ENCODE measurements at regions of chr1 and their contacts with region 1.

Region 1: GRCh38 chr1:50704126-50704525 is 255.9 kb downstream of the FAF1 start:
- DNase-seq: no peak
- ATAC-seq: no peak

Region 2: GRCh38 chr1:50368179-50369012 is 335.7 kb before region 1 on chr1:
- intact Hi-C with region 1: loop called in 1 of 2 experiments (anchors 10 kb)
- DNase-seq: peak; percentile 28
- ATAC-seq: peak; percentile 15 to 51

Region 3: GRCh38 chr1:50508040-50508586 is 196.0 kb before region 1 on chr1:
- intact Hi-C with region 1: no loop called
- DNase-seq: no peak
- ATAC-seq: no peak